ENCODE measurements at regions of chrX and their contacts with region 1.

Region 1: GRCh38 chrX:112642349-112642748 is 37.4 kb downstream of the LHFPL1 start:
- DNase-seq: peak in 37 of 42 donors; percentile 4 to 70 (median 37)

Region 2: DNA sequence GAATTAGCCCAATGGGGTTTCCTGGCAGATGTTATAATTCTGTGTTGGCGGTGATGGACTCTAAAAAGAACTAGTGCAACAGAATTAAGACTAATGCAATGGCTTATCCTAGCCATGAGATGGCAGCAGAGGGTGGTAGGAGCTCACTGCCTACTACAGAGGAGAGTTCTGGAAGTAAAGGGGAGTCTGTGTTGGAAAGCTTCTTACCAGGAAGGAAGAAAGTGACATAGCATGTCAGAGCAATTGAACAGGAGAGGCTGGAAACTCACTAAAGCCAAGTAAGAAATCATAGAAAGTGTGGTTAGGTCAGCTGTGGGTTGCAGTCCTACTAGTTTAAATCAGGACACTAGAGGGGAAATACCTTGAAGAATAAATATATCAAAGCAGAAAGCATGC is 772.7 kb before region 1 on chrX:
- intact Hi-C with region 1: loop called (anchors 5 kb)
- DNase-seq: peak in 32 of 42 donors; percentile 3 to 65 (median 28)

Measured in head of caudate nucleus (tissue), 42 donors.